CD4-positive, alpha-beta T cell (primary cell): ENCODE measurements at regions of chr3 and their contacts with region 1.

Region 1: GRCh38 chr3:73086071-73086494 is 24.6 kb downstream of the EBLN2 start:
- DNase-seq: peak; percentile 20 to 73 (median 37)
- ATAC-seq: peak; percentile 78
- H3K4me3 ChIP-seq: no peak overlapping the region
- H3K4me3 Mint-ChIP-seq: peak overlapping the region; percentile 22
- H3K27ac ChIP-seq: no peak overlapping the region
- H3K27ac Mint-ChIP-seq: no peak overlapping the region
- H3K4me1 ChIP-seq: peaks cover 4% of the 10 kb centered on the region
- H3K4me1 Mint-ChIP-seq: peaks cover 7% of the 10 kb centered on the region
- H3K27me3 ChIP-seq: no peaks in the 10 kb centered on the region
- H3K27me3 Mint-ChIP-seq: no peaks in the 10 kb centered on the region
- CTCF ChIP-seq: peak; percentile 95

Region 2: GRCh38 chr3:71875461-71875947 is 1210.6 kb before region 1 on chr3:
- CTCF ChIA-PET with region 1: no interaction called
- POLR2A ChIA-PET with region 1: no interaction called
- intact Hi-C with region 1: loop called in 1 of 2 experiments (anchors 5 kb)
- DNase-seq: peak; percentile 63 to 84 (median 74)
- ATAC-seq: peak; percentile 99
- H3K4me3 ChIP-seq: no peak overlapping the region
- H3K4me3 Mint-ChIP-seq: no peak overlapping the region
- H3K27ac ChIP-seq: no peak overlapping the region
- H3K27ac Mint-ChIP-seq: no peak overlapping the region
- H3K4me1 ChIP-seq: peaks cover 12% of the 10 kb centered on the region
- H3K4me1 Mint-ChIP-seq: peaks cover 21% of the 10 kb centered on the region
- H3K27me3 ChIP-seq: no peaks in the 10 kb centered on the region
- H3K27me3 Mint-ChIP-seq: no peaks in the 10 kb centered on the region
- CTCF ChIP-seq: peak; percentile 78

Region 3: DNA sequence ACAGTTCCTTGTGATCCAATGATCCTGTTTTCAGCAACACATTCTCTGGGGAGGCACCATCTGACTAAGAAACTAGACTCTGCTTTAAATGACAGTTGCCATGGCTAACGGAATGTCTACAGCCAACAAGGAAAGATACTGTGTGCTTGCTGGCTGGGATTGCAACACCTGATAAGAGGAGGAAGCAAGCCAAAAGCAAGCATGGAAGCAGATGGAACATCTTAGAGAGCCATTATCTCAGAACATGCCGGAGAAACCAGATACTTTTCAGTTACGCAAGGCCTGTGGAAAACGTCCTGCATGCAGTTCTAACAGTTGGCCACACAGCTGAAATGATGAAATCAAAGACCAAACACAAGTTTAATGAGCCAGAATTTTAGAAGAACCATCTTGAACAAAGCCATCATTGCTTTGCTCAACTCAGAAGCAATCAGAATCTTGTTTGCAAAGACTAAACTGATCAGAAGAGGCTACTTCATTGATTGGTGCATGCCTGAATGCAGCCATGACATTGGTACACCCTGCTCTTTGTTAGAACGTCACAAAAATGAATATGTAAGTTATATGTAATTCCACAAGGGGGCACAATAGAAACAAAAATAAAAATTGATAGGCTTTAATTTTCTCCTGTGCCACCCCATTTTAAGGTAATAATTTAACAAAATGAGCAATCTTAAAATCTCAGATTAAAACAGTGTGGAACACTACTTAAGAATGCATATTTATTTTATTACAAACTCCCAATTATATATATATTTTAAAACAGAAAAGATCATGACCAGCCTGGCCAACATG is 147.4 kb before region 1 on chr3:
- CTCF ChIA-PET with region 1: interaction called, 3 read pairs
- POLR2A ChIA-PET with region 1: no interaction called
- intact Hi-C with region 1: loop called (anchors 1 kb)
- DNase-seq: peak in 5 of 14 experiments; percentile 25 to 75 (median 65)
- ATAC-seq: peak; percentile 100
- H3K4me3 ChIP-seq: no peak overlapping the region
- H3K4me3 Mint-ChIP-seq: no peak overlapping the region
- H3K27ac ChIP-seq: no peak overlapping the region
- H3K27ac Mint-ChIP-seq: no peak overlapping the region
- H3K4me1 ChIP-seq: no peaks in the 10 kb centered on the region
- H3K4me1 Mint-ChIP-seq: no peaks in the 10 kb centered on the region
- H3K27me3 ChIP-seq: no peaks in the 10 kb centered on the region
- H3K27me3 Mint-ChIP-seq: no peaks in the 10 kb centered on the region
- CTCF ChIP-seq: peak; percentile 77

Region 4: DNA sequence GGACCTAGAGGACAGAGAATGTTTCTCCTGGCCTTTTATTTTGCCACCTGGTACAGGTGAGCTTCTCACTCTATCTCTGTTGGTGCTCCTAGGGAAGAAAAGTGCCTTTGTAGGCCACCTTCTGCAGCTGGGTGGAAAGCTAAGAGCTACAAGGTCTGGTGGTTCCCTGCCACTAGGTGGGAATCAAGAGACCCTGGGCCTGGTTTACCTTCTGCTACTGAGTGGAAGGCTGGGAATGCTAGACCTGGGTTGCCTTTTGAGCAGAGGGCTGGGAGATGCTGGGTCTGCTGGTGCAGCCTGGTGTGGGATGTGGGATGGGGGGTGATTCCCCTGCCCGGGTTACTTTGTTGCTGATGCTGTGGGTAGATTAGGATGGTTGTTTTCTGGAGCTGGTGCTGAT is 48.0 kb after region 1 on chr3:
- CTCF ChIA-PET with region 1: no interaction called
- POLR2A ChIA-PET with region 1: no interaction called
- intact Hi-C with region 1: no loop called
- DNase-seq: no peak
- ATAC-seq: no peak
- H3K4me3 ChIP-seq: no peak overlapping the region
- H3K4me3 Mint-ChIP-seq: no peak overlapping the region
- H3K27ac ChIP-seq: no peak overlapping the region
- H3K27ac Mint-ChIP-seq: no peak overlapping the region
- H3K4me1 ChIP-seq: no peaks in the 10 kb centered on the region
- H3K4me1 Mint-ChIP-seq: no peaks in the 10 kb centered on the region
- H3K27me3 ChIP-seq: peaks cover 6% of the 10 kb centered on the region in 2 experiments
- H3K27me3 Mint-ChIP-seq: peaks cover 22% of the 10 kb centered on the region
- CTCF ChIP-seq: no peak

Region 5: GRCh38 chr3:73401616-73402290 is 315.7 kb after region 1 on chr3:
- CTCF ChIA-PET with region 1: no interaction called
- POLR2A ChIA-PET with region 1: no interaction called
- intact Hi-C with region 1: no loop called
- DNase-seq: no peak
- ATAC-seq: no peak
- H3K4me3 ChIP-seq: no peak overlapping the region
- H3K4me3 Mint-ChIP-seq: no peak overlapping the region
- H3K27ac ChIP-seq: no peak overlapping the region
- H3K27ac Mint-ChIP-seq: no peak overlapping the region
- H3K4me1 ChIP-seq: no peaks in the 10 kb centered on the region
- H3K4me1 Mint-ChIP-seq: no peaks in the 10 kb centered on the region
- H3K27me3 ChIP-seq: peaks cover 0 to 3% of the 10 kb centered on the region in 2 experiments
- H3K27me3 Mint-ChIP-seq: peaks cover 17% of the 10 kb centered on the region
- CTCF ChIP-seq: no peak